Transverse colon (tissue), 4 donors: ENCODE measurements at regions of chr1 and their contacts with region 1.

Region 1: GRCh38 chr1:167533851-167534300 is 15.5 kb upstream of the CD247 start:
- DNase-seq: peak; percentile 74
- H3K4me3 ChIP-seq: no peak overlapping the region
- H3K27ac ChIP-seq: no peak overlapping the region
- H3K4me1 ChIP-seq: no peaks in the 10 kb centered on the region
- H3K27me3 ChIP-seq: no peaks in the 10 kb centered on the region
- CTCF ChIP-seq: peak; percentile 73 to 91 (median 88)
- EP300 ChIP-seq: no peak
- POLR2A ChIP-seq: no peak

Region 2: DNA sequence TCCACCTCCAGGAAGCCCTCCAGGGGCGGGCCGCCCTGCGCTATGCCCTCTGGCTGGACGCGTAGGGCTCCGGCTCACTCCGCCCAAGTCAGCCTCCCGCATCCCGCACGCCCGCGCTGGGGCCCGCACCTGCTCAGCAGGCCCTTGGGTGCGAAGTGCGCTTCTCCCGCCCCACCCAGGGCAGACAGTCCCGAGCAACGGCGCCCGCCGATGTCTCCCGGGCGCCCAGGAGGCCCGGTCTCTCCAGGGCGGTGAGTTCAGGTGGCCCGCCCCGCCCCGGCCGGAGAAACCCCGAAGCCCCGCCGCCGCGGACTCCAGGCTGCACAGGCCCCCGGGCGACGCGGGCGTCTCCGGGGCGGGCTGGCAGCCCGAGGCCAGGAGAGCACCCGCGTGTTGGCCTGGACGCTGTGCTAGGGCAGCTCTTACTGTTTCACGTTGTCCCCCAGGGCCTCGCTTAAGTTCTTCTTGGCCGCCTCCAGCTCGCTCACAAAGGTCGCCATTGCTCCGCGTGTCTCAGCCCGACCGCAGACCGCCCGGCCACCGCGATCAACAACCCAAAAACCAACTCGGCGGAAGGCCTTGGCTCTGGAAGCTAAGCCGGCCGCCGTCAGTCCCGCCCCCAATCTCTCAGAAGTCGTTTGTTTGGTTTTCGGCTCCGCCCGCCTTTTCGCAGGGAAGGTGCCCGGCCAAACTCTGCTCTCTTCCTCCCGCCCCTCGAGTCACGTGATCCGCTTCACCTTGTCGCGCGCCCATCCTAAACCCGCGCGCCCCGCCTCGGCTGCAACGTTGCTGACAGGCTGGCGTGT is 657.9 kb before region 1 on chr1 and contains the start of gene TADA1:
- in situ Hi-C with region 1: loop called in 1 of 4 experiments (anchors 25 kb)
- intact Hi-C with region 1: no loop called
- DNase-seq: peak; percentile 99
- H3K4me3 ChIP-seq: peak within 1 kb of the TSS; percentile 75 to 95 (median 84)
- H3K27ac ChIP-seq: peak within 1 kb of the TSS; percentile 93 to 99 (median 97)
- H3K4me1 ChIP-seq: peaks cover 8 to 26% (median 20%) of the 10 kb centered on the region in 4 donors
- H3K27me3 ChIP-seq: no peaks in the 10 kb centered on the region
- CTCF ChIP-seq: no peak
- EP300 ChIP-seq: no peak
- POLR2A ChIP-seq: peak; percentile 67
- total RNA-seq, gene TADA1: 1.5 to 21.7 (median 12.0) TPM

Region 3: DNA sequence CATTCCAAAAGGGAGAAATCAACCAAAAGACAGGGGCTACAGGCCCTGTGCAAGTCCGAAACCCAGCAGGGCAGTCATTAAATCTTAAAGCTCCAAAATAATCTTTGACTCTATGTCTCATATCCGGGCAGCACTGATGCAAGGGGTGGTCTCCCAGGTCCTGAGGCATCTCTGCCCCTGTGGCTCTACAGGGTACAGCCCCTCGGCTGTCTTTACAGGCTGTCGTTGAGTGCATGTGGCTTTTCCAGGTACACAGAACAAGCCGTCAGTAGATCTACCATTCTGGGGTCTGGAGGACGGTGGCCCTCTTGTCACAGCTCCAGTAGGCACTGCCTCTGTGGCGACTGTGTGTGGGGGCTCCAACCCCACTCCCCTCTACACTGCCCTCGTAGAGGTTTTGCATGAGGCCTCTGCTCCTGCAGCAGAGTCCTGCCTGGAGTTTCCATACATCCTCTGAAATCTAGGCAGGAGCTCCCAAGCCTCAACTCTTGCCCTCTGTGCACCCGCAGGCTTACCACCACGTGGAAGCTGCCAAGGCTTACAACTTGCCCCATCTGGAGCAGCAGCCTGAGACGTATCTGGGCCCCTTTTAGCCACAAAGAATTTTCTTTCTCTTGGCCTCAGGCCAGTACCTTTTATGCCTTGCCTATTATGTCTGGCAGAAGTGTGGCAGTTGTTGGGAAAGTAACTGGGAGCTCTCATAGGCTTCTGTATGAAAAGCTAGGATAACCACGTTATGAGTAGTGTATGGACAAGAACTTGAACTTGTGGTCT is 260.7 kb before region 1 on chr1:
- in situ Hi-C with region 1: loop called in 2 of 4 experiments (anchors 10 to 25 kb)
- intact Hi-C with region 1: loop called (anchors 10 kb)
- DNase-seq: no peak
- H3K4me3 ChIP-seq: no peak overlapping the region
- H3K27ac ChIP-seq: no peak overlapping the region
- H3K4me1 ChIP-seq: peaks cover 0 to 42% (median 18%) of the 10 kb centered on the region in 4 donors
- H3K27me3 ChIP-seq: no peaks in the 10 kb centered on the region
- CTCF ChIP-seq: no peak
- EP300 ChIP-seq: no peak
- POLR2A ChIP-seq: no peak

Region 4: DNA sequence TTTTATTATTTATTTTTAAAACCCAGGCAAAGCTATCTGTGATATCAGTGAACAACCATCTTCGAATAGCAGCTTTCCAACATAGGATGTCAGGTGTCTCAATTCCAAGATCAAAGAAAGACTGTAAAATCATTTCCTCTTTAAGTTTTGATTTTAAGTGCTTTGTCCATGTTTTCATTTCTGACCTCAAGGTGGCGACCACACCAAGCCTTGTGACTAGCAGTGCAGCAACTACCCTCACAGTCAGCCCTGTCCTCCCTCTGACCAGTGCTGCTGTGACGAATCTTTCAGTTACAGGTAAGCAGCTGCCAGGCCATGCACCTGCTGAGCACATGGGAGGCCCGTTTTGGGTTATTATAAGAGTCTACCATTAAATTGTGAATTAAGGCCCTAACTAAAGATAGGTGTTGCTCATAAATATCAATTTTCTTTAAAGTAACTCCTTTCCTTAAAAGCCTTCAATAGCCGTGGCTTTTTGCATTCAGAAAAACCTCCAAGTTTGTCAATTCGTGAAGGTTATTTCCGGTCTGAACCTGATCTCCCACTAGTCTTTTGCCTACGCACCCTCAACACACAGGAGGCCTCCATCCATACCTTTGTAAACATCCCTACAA is 132.5 kb before region 1 on chr1:
- in situ Hi-C with region 1: loop called in 2 of 4 experiments (anchors 10 to 25 kb)
- intact Hi-C with region 1: no loop called
- DNase-seq: peak; percentile 71
- H3K4me3 ChIP-seq: no peak overlapping the region
- H3K27ac ChIP-seq: no peak overlapping the region
- H3K4me1 ChIP-seq: peaks cover 0 to 5% (median 1%) of the 10 kb centered on the region in 4 donors
- H3K27me3 ChIP-seq: no peaks in the 10 kb centered on the region
- CTCF ChIP-seq: peak; percentile 36 to 79 (median 53)
- EP300 ChIP-seq: no peak
- POLR2A ChIP-seq: no peak

Region 5: DNA sequence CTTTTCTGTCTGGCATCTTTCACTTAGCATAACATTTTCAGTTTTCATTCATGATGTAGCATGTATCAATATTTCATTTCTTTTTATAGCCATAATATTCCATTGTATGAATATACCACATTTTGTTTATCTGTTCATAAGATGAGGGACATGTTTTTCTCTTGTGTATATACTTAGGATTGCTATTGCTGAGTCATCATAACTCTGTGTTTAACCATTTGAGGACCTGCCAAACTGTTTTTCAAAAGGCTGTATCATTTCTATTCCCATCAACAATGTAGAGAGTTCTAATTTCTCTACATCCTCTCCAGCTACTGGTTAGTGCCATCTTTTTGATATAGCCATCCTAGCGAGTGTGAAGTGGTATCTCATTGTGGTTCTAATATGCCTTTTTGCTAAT is 214.1 kb after region 1 on chr1:
- in situ Hi-C with region 1: no loop called
- intact Hi-C with region 1: no loop called
- DNase-seq: no peak
- H3K4me3 ChIP-seq: no peak overlapping the region
- H3K27ac ChIP-seq: no peak overlapping the region
- H3K4me1 ChIP-seq: peaks cover 12 to 68% (median 30%) of the 10 kb centered on the region in 4 donors
- H3K27me3 ChIP-seq: no peaks in the 10 kb centered on the region
- CTCF ChIP-seq: no peak
- EP300 ChIP-seq: no peak
- POLR2A ChIP-seq: no peak